Posterior vena cava (tissue), 2 donors: ENCODE measurements at regions of chr6 and their contacts with region 1.

Region 1: GRCh38 chr6:31680840-31681671 is at the start of gene LY6G5C:
- DNase-seq: peak; percentile 95
- total RNA-seq, gene LY6G5C: 1.7 to 1.9 TPM

Region 2: GRCh38 chr6:31952140-31952805 is 271.2 kb after region 1 on chr6:
- intact Hi-C with region 1: loop called in 1 of 2 experiments (anchors 5 kb)
- DNase-seq: no peak